WTC11 (cell line): ENCODE measurements at regions of chr16 and their contacts with region 1.

Region 1: DNA sequence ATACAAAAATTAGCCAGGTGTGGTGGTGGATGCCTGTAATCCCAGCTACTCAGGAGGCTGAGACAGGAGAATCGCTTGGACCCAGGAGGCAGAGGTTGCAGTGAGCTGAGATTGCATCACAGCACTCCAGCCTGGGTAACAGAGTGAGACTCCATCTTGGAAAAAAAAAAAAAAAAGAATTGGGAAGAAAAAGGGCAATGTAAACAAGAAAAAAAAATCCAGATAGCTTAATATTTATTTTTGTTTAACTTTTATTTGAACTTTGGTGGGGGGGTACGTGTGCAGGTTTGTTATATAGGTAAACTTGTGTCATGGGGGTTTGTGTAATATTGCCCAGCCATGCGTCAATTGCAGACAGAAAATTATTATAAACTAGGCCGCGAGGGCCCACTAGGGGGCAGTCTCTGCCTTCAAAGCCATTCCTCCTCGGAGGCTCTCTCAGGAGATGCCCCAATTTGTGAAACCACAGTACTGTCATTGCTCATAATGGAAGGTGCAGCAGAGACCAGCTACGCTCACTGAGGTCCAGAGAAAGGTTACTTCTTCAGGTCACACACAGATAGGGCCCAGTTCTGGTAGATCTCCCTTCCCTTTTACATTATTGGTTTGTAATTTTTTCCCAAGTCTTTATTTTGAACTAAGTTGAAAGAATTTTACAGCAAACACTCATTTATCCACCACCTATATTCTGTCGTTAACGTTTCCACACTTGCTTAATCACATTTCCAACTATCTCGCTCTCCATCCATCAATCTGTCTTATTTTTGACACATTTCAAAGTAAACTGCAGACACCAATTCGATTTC is 206.2 kb downstream of the PRKCB start:
- DNase-seq: peak; percentile 83
- ATAC-seq: peak; percentile 37
- H3K4me3 Mint-ChIP-seq: no peak overlapping the region
- H3K27ac Mint-ChIP-seq: no peak overlapping the region
- H3K4me1 Mint-ChIP-seq: peaks cover 21% of the 10 kb centered on the region
- H3K27me3 Mint-ChIP-seq: no peaks in the 10 kb centered on the region
- CTCF ChIP-seq: peak; percentile 79

Region 2: GRCh38 chr16:24054741-24055491 is 12.9 kb after region 1 on chr16:
- CTCF ChIA-PET with region 1: interaction called, 38 read pairs
- POLR2A ChIA-PET with region 1: no interaction called
- DNase-seq: peak; percentile 46
- ATAC-seq: peak; percentile 76
- H3K4me3 Mint-ChIP-seq: no peak overlapping the region
- H3K27ac Mint-ChIP-seq: peak overlapping the region; percentile 35; the same call in 1 of the 2 replicates
- H3K4me1 Mint-ChIP-seq: peaks cover 68% of the 10 kb centered on the region
- H3K27me3 Mint-ChIP-seq: no peaks in the 10 kb centered on the region; the same call in 1 of the 2 replicates
- CTCF ChIP-seq: no peak

Region 3: GRCh38 chr16:24163935-24164334 is 121.9 kb after region 1 on chr16:
- CTCF ChIA-PET with region 1: interaction called, 17 read pairs
- POLR2A ChIA-PET with region 1: no interaction called
- DNase-seq: no peak
- ATAC-seq: peak; percentile 66; the same call in 1 of the 2 replicates
- H3K4me3 Mint-ChIP-seq: no peak overlapping the region
- H3K27ac Mint-ChIP-seq: peak overlapping the region; percentile 73; the same call in 1 of the 2 replicates
- H3K4me1 Mint-ChIP-seq: peaks cover 25% of the 10 kb centered on the region
- H3K27me3 Mint-ChIP-seq: no peaks in the 10 kb centered on the region
- CTCF ChIP-seq: no peak

Region 4: DNA sequence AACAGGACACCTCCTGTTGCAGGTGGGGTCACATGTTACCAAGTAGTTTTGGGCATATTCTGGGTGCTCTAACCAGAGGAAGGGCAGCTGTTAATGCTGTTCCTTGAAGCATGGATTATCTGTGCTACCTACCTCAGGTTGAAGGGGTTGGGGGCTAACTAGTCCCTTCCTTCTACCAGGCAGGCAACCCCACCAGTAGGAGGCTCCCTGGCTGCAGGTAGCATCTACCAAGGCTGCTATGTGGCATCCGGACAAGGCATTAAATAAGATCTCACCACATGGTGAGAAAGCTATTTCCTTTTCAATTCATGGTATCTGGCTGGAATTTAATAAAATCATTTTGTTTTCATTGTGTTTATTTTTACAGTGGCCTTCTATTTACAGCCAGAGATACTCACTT is 276.6 kb after region 1 on chr16:
- CTCF ChIA-PET with region 1: interaction called, 17 read pairs
- POLR2A ChIA-PET with region 1: no interaction called
- DNase-seq: peak; percentile 58
- ATAC-seq: peak; percentile 96
- H3K4me3 Mint-ChIP-seq: no peak overlapping the region
- H3K27ac Mint-ChIP-seq: no peak overlapping the region
- H3K4me1 Mint-ChIP-seq: peaks cover 26% of the 10 kb centered on the region
- H3K27me3 Mint-ChIP-seq: no peaks in the 10 kb centered on the region; the same call in 1 of the 2 replicates
- CTCF ChIP-seq: no peak

Region 5: DNA sequence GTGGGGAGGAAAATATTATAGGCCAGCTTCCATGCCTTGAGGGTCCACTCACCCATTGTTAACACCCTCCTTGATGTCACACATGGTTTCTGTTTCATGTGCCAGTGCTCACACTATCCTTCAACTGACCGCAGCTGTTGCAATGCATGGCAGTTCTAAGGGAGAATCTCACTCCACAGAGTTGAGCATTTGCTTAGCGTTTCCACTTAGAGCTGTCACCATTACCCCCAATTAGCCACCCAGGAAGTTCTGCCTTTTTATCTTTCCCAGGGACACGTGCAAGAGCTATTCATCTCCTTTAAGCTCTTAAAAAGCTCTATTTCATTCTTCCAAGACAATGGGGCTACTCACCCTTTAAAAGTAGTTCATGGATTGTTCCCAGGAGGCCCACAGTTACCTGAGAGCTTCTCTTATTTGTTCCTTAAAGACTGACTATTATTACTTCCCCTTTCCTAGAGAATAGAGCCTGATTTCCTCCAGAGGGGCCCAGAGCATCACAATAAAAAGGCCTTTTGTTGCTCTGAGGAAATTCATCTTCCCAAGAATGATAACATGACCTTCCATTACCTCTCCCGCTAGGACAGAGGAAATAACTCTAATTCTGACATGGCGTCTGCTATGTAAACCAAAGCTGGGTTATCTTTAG is 340.9 kb after region 1 on chr16:
- CTCF ChIA-PET with region 1: interaction called, 14 read pairs
- POLR2A ChIA-PET with region 1: no interaction called
- DNase-seq: no peak
- ATAC-seq: peak; percentile 89
- H3K4me3 Mint-ChIP-seq: no peak overlapping the region
- H3K27ac Mint-ChIP-seq: no peak overlapping the region; the same call in 1 of the 2 replicates
- H3K4me1 Mint-ChIP-seq: peaks cover 36% of the 10 kb centered on the region
- H3K27me3 Mint-ChIP-seq: peaks cover 94% of the 10 kb centered on the region
- CTCF ChIP-seq: no peak

Region 6: DNA sequence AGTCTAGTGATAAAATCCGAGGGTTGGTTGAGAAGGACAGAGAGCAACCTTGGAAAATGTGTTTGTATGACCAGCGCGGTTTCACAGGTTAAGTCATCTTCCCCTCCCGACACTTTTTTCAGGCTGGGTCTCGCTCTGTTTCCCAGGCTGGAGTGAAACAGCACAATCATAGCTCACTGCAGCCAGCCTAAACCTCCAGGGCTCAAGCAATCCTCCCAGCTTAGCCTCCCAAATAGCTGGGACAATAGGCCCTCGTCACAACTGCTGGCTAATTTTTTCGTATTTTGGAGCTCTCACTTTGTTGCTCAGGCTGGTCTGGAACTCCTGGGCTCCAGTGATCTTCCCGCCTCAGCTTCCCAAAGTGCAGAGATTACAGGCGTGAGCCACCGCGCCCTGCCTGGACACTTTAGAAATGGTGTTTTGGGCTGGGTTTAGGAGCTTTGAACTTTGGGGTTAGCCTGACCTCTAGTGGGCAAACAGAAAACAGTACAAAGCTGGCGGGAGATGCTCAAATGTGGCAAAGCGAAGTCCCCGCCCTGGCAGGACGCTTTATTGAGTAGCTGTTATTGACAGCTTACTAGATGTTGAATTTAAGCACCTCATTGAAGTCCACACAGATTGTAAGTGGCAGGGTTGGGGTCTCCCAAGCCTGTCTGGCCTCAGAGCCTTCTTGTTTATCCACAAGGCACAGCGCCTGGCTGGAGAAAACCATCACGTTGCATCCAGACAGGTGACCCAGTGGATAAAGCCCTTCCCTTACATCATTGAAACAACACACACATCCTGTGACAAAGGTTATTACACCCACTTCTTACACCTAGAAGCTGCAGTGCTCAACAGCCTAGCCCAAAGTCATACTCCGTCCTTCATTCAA is 462.7 kb after region 1 on chr16:
- CTCF ChIA-PET with region 1: interaction called, 136 read pairs
- POLR2A ChIA-PET with region 1: interaction called, 3 read pairs
- DNase-seq: peak; percentile 64
- ATAC-seq: peak; percentile 95
- H3K4me3 Mint-ChIP-seq: no peak overlapping the region
- H3K27ac Mint-ChIP-seq: no peak overlapping the region
- H3K4me1 Mint-ChIP-seq: no peaks in the 10 kb centered on the region
- H3K27me3 Mint-ChIP-seq: peaks cover 11% of the 10 kb centered on the region
- CTCF ChIP-seq: peak; percentile 48